ENCODE measurements at regions of chr1 and their contacts with region 1.

Region 1: GRCh38 chr1:28914228-28915030 is at the start of gene EPB41:
- DNase-seq: peak; percentile 76 to 96 (median 94)
- ATAC-seq: peak; percentile 77
- H3K4me3 ChIP-seq: peak within 1 kb of the TSS; percentile 80 to 86
- H3K4me3 Mint-ChIP-seq: peak within 1 kb of the TSS; percentile 99
- H3K27ac ChIP-seq: peak within 1 kb of the TSS; percentile 62 to 77
- H3K27ac Mint-ChIP-seq: peak within 1 kb of the TSS; percentile 98
- H3K4me1 ChIP-seq: peaks cover 40% of the 10 kb centered on the region
- H3K4me1 Mint-ChIP-seq: peaks cover 49% of the 10 kb centered on the region
- H3K27me3 ChIP-seq: no peaks in the 10 kb centered on the region
- H3K27me3 Mint-ChIP-seq: no peaks in the 10 kb centered on the region
- CTCF ChIP-seq: no peak
- total RNA-seq, gene EPB41: 109 to 117 TPM

Region 2: GRCh38 chr1:28950449-28950848 is 36.0 kb after region 1 on chr1:
- CTCF ChIA-PET with region 1: interaction called, 3 read pairs
- POLR2A ChIA-PET with region 1: interaction called, 4 read pairs
- intact Hi-C with region 1: loop called in 1 of 2 experiments (anchors 5 kb)
- DNase-seq: no peak
- ATAC-seq: no peak
- H3K4me3 ChIP-seq: no peak overlapping the region
- H3K4me3 Mint-ChIP-seq: no peak overlapping the region
- H3K27ac ChIP-seq: no peak overlapping the region
- H3K27ac Mint-ChIP-seq: peak overlapping the region; percentile 32
- H3K4me1 ChIP-seq: peaks cover 30% of the 10 kb centered on the region
- H3K4me1 Mint-ChIP-seq: peaks cover 61% of the 10 kb centered on the region
- H3K27me3 ChIP-seq: no peaks in the 10 kb centered on the region
- H3K27me3 Mint-ChIP-seq: no peaks in the 10 kb centered on the region
- CTCF ChIP-seq: no peak

Region 3: DNA sequence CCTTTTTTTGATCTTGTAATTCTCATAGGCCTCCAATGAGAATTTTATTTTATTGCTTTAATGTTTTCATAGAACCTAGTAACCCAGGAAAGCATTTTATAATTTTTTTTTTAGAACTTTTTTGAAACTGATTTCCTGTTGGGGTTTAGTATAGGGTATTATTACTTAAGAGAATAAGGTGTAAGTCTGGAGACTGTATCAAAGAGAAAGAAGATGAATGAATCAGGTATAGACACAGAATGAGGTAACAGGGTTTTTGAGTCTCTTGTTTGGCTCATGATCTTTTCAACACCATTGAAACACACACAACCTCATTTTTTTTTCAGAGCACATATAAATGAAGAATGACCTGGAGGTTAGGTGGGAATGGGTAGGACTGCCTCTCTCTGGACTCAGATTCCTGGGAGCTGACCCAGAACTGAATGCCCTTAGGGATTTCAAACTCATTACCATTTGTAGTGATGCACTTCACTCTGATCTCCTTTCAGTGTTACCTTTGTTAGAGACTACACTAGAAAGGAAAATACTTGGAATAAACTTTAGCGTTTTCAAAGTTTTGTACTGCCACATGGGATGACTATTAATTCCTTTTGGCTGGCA is 50.9 kb after region 1 on chr1:
- CTCF ChIA-PET with region 1: no interaction called
- POLR2A ChIA-PET with region 1: interaction called, 3 read pairs
- intact Hi-C with region 1: loop called in 1 of 2 experiments (anchors 2 kb)
- DNase-seq: peak in 1 of 9 experiments; percentile 42
- ATAC-seq: peak; percentile 90
- H3K4me3 ChIP-seq: no peak overlapping the region
- H3K4me3 Mint-ChIP-seq: peak overlapping the region; percentile 18
- H3K27ac ChIP-seq: no peak overlapping the region
- H3K27ac Mint-ChIP-seq: peak overlapping the region; percentile 86
- H3K4me1 ChIP-seq: peaks cover 19% of the 10 kb centered on the region
- H3K4me1 Mint-ChIP-seq: peaks cover 65% of the 10 kb centered on the region
- H3K27me3 ChIP-seq: no peaks in the 10 kb centered on the region
- H3K27me3 Mint-ChIP-seq: no peaks in the 10 kb centered on the region
- CTCF ChIP-seq: no peak

Region 4: GRCh38 chr1:28983509-28984310 is 69.3 kb after region 1 on chr1:
- CTCF ChIA-PET with region 1: interaction called, 10 read pairs
- POLR2A ChIA-PET with region 1: no interaction called
- intact Hi-C with region 1: loop called in 1 of 2 experiments (anchors 2 kb)
- DNase-seq: peak in 5 of 9 experiments; percentile 11 to 42 (median 33)
- ATAC-seq: no peak
- H3K4me3 ChIP-seq: no peak overlapping the region
- H3K4me3 Mint-ChIP-seq: peak overlapping the region; percentile 8
- H3K27ac ChIP-seq: no peak overlapping the region
- H3K27ac Mint-ChIP-seq: peak overlapping the region; percentile 46
- H3K4me1 ChIP-seq: peaks cover 18% of the 10 kb centered on the region
- H3K4me1 Mint-ChIP-seq: peaks cover 79% of the 10 kb centered on the region
- H3K27me3 ChIP-seq: no peaks in the 10 kb centered on the region
- H3K27me3 Mint-ChIP-seq: no peaks in the 10 kb centered on the region
- CTCF ChIP-seq: peak; percentile 13

Measured in CD8-positive, alpha-beta T cell (primary cell).